Gastrocnemius medialis (tissue), 4 donors: ENCODE measurements at regions of chr15 and their contacts with region 1.

Region 1: DNA sequence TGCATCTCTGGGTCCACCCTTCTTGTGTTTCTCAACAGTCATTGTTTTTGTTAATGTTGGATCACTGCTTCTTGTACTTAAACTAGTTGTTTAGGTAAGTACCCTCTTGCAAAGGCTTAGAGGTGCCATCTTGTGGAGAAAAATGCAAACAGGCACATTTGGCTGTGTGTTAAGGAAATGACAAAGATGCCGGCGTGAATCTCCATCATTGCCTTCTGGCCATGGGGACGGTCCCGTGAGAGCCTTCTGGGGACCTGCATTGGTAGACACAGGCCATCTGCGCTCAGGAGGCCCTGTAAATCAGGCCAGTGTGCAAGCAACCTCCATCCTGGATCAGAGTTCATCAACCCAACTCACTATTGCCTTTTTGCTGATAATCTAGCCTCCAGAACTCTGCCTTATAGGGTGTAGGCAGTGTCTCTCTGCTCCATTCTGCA is 158.6 kb upstream of the NR2E3 start:
- DNase-seq: no peak
- ATAC-seq: no peak
- H3K4me3 ChIP-seq: no peak overlapping the region
- H3K27ac ChIP-seq: no peak overlapping the region
- H3K4me1 ChIP-seq: peaks cover 0 to 6% of the 10 kb centered on the region in 2 donors
- H3K27me3 ChIP-seq: no peaks in the 10 kb centered on the region
- CTCF ChIP-seq: peak in 4 of 5 experiments; percentile 13 to 46 (median 35)
- POLR2A ChIP-seq: no peak

Region 2: DNA sequence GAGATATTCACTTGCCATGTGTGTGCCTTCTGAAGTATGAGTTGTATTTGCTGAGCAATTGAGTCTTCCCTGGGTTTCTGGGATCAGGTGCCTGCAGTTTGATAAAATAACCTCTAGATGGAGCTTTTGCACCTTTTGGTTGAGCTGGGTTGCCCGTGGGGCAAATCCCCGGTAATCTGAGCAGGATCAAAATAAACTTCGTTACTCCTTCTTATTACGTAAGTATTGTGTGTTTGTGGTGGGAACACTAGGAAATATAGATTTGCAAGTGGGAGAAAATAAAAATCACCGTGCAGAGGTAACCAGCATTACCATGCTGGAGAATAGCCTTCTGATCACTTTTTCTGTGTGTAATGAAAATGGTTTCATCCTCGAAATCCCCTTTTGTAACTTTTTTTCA is 118.8 kb before region 1 on chr15:
- in situ Hi-C with region 1: no loop called
- intact Hi-C with region 1: loop called (anchors 5 kb)
- DNase-seq: no peak
- ATAC-seq: no peak
- H3K4me3 ChIP-seq: no peak overlapping the region
- H3K27ac ChIP-seq: no peak overlapping the region
- H3K4me1 ChIP-seq: no peaks in the 10 kb centered on the region
- H3K27me3 ChIP-seq: no peaks in the 10 kb centered on the region
- CTCF ChIP-seq: peak; percentile 17 to 57 (median 46)
- POLR2A ChIP-seq: no peak

Region 3: GRCh38 chr15:71575474-71576045 is 76.2 kb before region 1 on chr15:
- in situ Hi-C with region 1: no loop called
- intact Hi-C with region 1: loop called (anchors 1 kb)
- DNase-seq: no peak
- ATAC-seq: no peak
- H3K4me3 ChIP-seq: no peak overlapping the region
- H3K27ac ChIP-seq: no peak overlapping the region
- H3K4me1 ChIP-seq: peaks cover 14% of the 10 kb centered on the region in 2 donors
- H3K27me3 ChIP-seq: no peaks in the 10 kb centered on the region
- CTCF ChIP-seq: peak; percentile 27 to 46 (median 39)
- POLR2A ChIP-seq: no peak